Head of caudate nucleus (tissue), 42 donors: ENCODE measurements at regions of chr3 and their contacts with region 1.

Region 1: DNA sequence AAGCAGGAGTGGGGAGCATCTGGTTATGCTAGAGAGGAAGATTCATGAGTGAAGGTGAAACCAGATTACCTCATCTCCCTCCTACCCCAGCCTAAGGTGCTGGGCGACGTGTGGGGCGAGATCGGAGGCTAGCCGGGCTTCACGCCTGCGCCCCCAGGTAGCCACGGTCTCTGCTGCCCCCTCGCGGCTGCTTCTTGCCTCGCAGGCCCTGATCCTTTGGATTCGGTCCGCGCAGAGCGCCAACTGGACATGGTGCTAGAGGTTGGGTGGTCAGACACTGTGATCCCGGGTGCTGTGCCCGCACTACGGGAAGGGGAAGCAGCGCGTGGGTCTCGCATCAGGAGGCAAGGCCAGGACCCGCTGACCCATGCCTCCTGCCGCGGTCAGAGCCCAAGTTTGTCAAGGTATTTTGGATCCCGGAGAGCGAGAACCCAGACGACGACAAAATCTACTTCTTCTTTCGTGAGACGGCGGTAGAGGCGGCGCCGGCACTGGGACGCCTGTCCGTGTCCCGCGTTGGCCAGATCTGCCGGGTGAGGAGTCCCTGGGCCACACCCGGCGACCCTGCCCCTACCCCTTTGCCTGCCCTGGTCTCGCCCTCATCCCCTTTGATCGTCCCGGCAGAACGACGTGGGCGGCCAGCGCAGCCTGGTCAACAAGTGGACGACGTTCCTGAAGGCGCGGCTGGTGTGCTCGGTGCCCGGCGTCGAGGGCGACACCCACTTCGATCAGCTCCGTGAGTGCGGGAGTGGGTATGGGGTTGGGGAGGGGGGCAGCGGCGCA is 4.2 kb downstream of the SEMA3B start:
- DNase-seq: peak; percentile 77 to 97 (median 90)

Region 2: DNA sequence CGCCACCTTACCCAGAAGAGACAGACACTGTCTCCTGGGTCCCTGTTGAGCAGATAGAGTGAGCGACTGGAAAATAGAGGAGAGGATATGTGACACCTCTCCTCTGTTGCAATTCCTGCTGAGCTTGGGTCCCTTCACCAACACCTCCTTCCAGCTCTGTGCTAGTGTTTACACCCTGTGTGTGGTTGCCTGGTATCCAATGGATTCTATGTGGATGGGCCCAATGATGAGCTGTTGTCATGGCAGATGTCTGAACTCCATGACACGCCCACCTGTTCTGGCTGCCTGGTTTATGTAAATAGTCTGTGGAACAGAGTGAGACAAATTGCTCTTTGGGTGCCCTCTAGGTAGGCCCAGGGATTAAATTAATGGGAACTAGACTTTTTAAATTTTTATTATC is 160.6 kb before region 1 on chr3:
- intact Hi-C with region 1: loop called (anchors 10 kb)
- DNase-seq: no peak

Region 3: GRCh38 chr3:50192689-50193141 is 80.4 kb before region 1 on chr3:
- intact Hi-C with region 1: loop called (anchors 5 kb)
- DNase-seq: peak in 41 of 42 donors; percentile 47 to 90 (median 78)

Region 4: DNA sequence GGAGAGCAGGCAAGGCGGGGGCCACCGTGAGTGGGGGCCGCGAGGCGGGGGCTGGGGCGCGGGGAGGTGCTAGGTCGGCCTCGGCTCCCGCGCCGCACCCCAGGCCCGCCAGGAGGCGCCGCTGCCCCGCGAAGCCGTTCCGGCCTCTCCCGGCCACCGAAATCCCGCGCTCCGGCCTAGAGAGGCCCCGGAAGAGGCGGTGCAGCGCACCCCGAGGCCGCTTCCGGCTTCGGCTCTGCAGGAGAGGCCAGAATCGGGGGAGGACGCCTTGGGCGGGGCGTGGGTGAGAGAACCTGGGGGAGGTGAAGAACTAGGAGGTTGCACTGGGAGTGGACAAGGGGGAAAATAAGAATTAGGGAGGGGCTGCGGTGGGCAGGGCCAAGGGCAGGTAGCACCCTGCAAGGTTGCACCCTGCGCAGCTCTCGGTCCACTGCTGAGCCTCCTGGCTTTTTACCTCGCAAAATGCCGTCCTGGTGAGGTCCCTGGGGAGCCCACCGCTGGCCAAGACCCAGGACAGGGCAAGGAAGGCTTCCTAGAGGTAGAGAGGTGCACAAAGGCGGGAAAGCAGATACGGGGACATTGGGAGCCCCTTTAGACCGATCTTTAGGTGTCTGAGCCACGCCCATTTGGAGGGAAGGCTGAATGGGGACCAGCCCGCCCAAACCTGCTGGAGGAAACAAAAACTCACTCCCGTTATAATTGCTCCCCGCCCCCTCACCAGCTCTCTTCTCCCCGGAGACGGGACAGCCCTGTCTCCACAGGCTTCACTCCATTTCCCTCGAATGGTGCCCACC is 45.5 kb before region 1 on chr3:
- intact Hi-C with region 1: loop called (anchors 2 kb)
- DNase-seq: peak; percentile 68 to 96 (median 90)

Region 5: DNA sequence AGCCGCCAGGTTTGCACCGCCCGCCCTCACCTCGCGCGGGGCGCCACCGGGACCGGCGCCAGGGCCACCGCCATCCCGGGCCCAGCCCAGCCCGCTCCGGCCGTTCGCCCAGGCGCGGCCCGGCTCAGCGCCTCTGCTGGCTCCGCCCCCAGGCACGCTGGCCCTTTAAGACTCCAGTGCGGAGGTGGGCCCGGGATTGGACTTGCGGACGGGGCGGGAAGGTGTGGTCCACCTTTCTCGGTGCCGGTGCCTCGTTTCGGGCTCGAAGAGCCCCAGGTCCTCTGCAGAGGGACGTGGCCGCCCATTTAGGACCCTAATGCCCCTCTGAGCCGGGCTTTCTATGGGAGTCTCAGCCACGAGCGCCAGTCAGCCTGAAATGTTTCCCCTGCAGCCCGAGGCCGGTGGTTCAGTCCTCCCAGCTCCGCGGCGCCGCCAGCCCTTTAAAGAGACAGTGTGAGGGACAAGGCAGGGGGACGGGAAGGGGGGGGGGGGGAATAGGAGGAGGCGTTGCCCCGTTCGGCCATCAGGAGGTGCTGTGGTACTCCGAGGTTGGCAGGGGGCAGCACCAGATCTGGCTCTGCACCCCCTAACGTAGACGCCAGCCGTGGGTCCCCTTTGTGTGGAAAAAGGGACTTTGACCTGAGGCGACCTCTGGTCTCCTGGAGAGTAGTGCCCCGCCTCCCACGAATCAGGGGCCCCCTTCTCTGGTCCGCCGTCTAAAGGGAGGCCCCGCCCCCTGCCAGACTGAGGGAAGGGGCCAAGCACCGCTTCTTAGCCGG is 48.4 kb after region 1 on chr3:
- intact Hi-C with region 1: loop called (anchors 10 kb)
- DNase-seq: peak; percentile 77 to 97 (median 91)